A673 (cell line): ENCODE measurements at regions of chr2 and their contacts with region 1.

Region 1: GRCh38 chr2:195458936-195459335 is 198.1 kb upstream of the SLC39A10 start:
- DNase-seq: no peak
- H3K4me3 ChIP-seq: no peak overlapping the region
- H3K27ac ChIP-seq: no peak overlapping the region
- H3K4me1 ChIP-seq: no peaks in the 10 kb centered on the region
- H3K27me3 ChIP-seq: no peaks in the 10 kb centered on the region
- CTCF ChIP-seq: no peak

Region 2: DNA sequence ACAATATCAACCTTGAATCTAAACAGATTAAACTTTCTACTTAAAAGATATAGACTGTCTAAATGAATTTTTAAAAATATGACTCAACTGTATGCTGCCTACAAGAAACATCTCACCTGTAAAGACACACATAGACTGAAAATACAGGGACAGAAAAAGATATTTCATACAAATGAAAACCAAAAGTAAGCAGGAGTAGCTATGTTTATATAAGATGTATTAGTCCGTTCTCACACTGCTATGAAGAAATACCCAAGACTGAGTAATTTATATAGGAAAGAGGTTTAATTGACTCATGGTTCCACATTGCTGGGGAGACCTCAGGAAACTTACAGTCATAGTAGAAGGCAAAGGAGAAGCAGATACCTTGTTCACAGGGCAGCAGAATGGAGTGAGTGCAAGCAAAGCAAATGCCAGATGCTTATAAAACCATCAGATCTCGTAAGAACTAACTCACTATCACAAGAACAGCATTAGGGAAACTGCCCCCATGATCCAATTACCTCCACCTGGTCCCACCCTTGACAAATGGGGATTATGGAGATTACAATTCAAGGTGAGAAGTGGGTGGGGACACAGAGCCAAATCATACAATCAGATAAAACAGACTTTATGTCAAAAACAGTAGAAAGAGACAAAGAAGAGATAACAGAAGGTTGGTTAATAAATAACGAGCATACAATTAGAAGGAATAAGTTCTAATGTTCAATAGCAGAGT is 16.3 kb before region 1 on chr2:
- CTCF ChIA-PET with region 1: no interaction called
- POLR2A ChIA-PET with region 1: interaction called, 12 read pairs
- intact Hi-C with region 1: no loop called
- DNase-seq: no peak
- H3K4me3 ChIP-seq: no peak overlapping the region
- H3K27ac ChIP-seq: no peak overlapping the region
- H3K4me1 ChIP-seq: no peaks in the 10 kb centered on the region
- H3K27me3 ChIP-seq: no peaks in the 10 kb centered on the region
- CTCF ChIP-seq: no peak

Region 3: DNA sequence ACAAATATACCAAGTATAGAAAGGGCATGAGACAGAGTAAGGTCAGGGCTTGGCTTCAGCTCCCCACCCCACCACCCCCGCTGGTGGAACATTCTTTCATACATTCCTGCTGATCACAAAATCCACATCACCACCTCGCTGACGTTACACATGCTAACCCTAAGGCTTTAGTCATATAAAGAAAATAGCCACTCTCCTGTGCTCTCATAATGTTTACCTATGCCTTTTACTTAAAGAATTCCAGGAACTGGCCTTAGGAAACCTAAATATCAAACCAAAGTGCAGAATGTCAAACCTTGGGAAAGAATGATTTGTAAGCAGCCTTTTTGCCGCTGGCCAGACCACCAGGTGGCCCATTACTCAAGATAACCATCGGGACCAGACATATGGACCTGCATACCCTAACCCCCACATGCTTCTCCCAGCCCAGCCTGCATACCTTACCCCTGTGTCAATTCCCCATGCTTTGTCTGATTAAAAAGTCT is 61.8 kb after region 1 on chr2:
- CTCF ChIA-PET with region 1: no interaction called
- POLR2A ChIA-PET with region 1: no interaction called
- intact Hi-C with region 1: no loop called
- DNase-seq: no peak
- H3K4me3 ChIP-seq: no peak overlapping the region
- H3K27ac ChIP-seq: no peak overlapping the region
- H3K4me1 ChIP-seq: no peaks in the 10 kb centered on the region
- H3K27me3 ChIP-seq: no peaks in the 10 kb centered on the region
- CTCF ChIP-seq: no peak